Mammary epithelial cell (primary cell): ENCODE measurements at regions of chr2 and their contacts with region 1.

Region 1: DNA sequence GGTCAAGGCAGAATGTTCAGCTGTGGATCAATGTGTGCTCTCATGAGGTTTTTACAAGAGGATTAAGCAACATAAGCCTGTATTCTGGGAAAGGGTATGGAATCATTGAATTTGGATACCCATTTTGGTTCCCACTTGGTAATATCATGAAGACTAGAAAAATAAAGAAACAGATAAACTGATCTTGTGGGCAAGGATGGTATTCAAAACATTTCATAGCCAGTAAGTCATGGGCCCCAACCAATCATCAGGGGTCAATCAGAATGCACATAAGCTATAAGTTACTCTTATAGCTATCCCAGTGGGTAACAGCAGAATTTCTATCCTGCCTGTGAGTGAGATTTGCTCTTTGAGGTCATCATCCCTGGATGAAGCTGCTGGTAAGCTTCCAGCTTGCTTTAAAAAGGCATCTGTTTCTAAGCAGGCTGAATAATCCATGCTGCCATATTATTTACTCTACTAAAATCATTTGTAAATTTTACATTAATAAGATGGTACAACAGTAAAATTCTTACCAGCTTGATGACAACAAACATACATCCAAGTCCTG is 291.2 kb downstream of the RAD51AP2 start:
- DNase-seq: no peak
- H3K4me3 ChIP-seq: no peak overlapping the region
- H3K27ac ChIP-seq: no peak overlapping the region
- H3K4me1 ChIP-seq: no peaks in the 10 kb centered on the region
- H3K27me3 ChIP-seq: no peaks in the 10 kb centered on the region
- CTCF ChIP-seq: no peak

Region 2: GRCh38 chr2:17043173-17043572 is 183.8 kb before region 1 on chr2:
- CTCF ChIA-PET with region 1: no interaction called
- dilution Hi-C with region 1: no loop called
- in situ Hi-C with region 1: no loop called
- intact Hi-C with region 1: no loop called
- DNase-seq: peak; percentile 6
- H3K4me3 ChIP-seq: no peak overlapping the region
- H3K27ac ChIP-seq: no peak overlapping the region
- H3K4me1 ChIP-seq: no peaks in the 10 kb centered on the region
- H3K27me3 ChIP-seq: no peaks in the 10 kb centered on the region
- CTCF ChIP-seq: no peak

Region 3: DNA sequence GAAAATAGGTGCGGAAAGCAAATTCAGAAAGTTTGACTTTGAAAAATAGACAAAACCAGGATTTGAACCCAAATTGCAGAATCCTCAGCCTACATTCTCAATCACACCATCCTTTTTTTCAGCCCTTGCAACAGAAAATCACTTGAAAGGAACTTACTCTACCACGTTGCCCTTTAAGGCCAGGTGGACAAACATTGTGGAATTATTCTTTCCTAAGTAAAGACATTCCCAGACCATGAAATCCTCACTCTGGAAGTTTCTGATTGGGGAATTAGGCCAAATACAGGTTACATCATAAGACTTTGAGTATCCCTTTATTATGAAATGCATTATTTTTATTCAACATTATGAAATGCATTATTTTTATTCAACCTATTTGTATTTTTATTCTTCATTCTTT is 31.8 kb after region 1 on chr2:
- CTCF ChIA-PET with region 1: no interaction called
- dilution Hi-C with region 1: no loop called
- in situ Hi-C with region 1: no loop called
- intact Hi-C with region 1: loop called (anchors 1 kb)
- DNase-seq: no peak
- H3K4me3 ChIP-seq: no peak overlapping the region
- H3K27ac ChIP-seq: no peak overlapping the region
- H3K4me1 ChIP-seq: no peaks in the 10 kb centered on the region
- H3K27me3 ChIP-seq: no peaks in the 10 kb centered on the region
- CTCF ChIP-seq: no peak